ENCODE measurements at regions of chr2 and their contacts with region 1.

Region 1: DNA sequence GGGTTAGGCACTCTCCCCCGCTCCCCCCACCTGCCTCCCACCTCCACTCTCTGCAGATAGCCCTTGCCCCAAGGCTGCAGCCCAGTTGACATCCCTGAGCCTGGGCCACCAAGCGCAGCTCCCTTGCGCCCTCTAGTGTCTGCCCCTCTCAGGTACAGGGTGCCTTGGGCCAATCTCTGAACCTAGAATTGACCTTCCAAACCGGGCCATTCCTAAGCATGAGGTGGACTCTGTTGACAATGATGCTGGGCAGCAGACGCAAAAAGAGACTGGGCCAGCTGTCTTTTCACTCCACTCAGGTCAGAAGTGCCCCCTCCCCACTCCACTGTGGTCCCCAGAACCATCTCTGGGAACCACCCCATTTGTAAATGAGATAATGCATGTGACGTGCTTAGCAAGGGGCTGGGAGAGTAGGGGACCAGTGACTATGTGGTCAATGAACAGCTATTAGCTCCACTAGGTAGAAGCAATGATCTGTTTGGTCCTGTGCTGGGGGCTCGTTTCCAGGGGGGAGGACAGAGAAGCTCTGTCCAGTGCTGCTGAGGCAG is 43.3 kb upstream of the PLB1 start:
- DNase-seq: peak; percentile 92
- ATAC-seq: peak; percentile 57
- H3K4me3 Mint-ChIP-seq: no peak overlapping the region
- H3K27ac Mint-ChIP-seq: peak overlapping the region; percentile 11
- H3K4me1 Mint-ChIP-seq: peaks cover 40% of the 10 kb centered on the region
- H3K27me3 Mint-ChIP-seq: no peaks in the 10 kb centered on the region

Region 2: GRCh38 chr2:27703638-27704341 is 748.8 kb before region 1 on chr2:
- CTCF ChIA-PET with region 1: interaction called, 8 read pairs
- POLR2A ChIA-PET with region 1: no interaction called
- intact Hi-C with region 1: loop called (anchors 1 kb)
- DNase-seq: peak; percentile 92
- ATAC-seq: peak; percentile 78
- H3K4me3 Mint-ChIP-seq: no peak overlapping the region
- H3K27ac Mint-ChIP-seq: peak overlapping the region; percentile 7
- H3K4me1 Mint-ChIP-seq: peaks cover 21% of the 10 kb centered on the region
- H3K27me3 Mint-ChIP-seq: no peaks in the 10 kb centered on the region

Region 3: DNA sequence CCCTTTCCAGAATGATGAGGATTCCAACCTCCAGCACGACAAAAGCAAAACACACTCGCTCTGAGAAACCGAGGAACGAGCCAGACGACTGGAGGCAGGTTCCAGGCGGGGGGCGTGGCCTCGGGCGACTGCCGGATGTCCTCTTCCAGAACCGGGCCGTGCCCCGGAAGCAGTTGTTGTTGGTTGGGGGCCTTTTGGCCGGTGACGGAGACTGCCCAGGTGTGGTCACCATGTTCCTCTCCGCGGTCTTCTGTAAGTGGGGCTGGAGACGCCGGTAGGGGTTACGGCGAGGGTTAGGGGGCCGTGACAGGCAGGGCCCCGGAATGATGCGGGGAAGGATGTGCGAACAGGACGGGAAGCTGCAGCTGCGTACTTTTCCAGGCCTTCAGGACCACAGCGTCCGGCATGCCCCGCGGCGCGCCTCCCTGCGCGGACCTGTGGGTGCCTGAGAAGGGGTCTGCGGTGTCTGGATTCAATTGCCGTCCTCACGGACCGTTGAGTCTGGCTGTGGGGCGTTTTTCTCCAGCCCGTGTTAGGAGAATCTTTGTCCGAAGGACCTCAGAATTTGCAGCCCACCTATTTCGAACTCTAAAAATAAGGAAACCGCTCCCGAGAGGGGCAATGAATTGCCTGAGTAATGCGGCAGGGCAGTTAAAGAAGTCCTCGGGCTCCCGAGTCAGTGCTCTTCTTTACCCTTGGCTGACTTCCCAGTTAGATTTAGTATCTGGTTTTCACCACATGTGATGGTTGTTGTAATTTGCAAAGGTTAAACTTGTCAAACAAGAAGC is 680.9 kb before region 1 on chr2 and contains the start of gene MRPL33:
- CTCF ChIA-PET with region 1: interaction called, 3 read pairs
- POLR2A ChIA-PET with region 1: interaction called, 4 read pairs
- intact Hi-C with region 1: loop called in 1 of 2 experiments (anchors 1 kb)
- DNase-seq: peak; percentile 96
- ATAC-seq: peak; percentile 98
- H3K4me3 Mint-ChIP-seq: peak within 1 kb of the TSS; percentile 99
- H3K27ac Mint-ChIP-seq: peak within 1 kb of the TSS; percentile 99
- H3K4me1 Mint-ChIP-seq: peaks cover 42% of the 10 kb centered on the region
- H3K27me3 Mint-ChIP-seq: no peaks in the 10 kb centered on the region
- total RNA-seq, gene MRPL33: 44.7 to 68.0 TPM

Region 4: DNA sequence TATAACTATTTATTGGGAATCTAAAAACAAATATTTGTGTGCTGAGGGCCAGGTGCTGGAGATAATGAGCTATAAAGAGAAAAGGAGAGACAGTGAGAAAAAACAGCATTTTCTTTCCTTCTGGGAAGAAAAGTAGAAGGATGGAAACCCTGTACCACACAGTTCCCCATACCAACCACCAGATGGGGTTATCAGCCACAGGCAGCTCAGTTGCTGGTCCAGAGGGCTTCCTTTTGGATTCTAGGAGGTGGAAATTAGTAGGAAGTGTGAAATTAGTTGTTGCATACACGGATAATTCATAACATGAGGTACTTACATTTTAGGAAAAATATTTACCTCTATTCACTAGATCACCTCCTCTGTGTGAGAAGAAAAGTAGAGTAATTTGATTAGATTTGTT is 297.0 kb before region 1 on chr2:
- CTCF ChIA-PET with region 1: interaction called, 7 read pairs
- POLR2A ChIA-PET with region 1: no interaction called
- intact Hi-C with region 1: loop called in 1 of 2 experiments (anchors 1 kb)
- DNase-seq: peak; percentile 33
- ATAC-seq: no peak
- H3K4me3 Mint-ChIP-seq: no peak overlapping the region
- H3K27ac Mint-ChIP-seq: no peak overlapping the region
- H3K4me1 Mint-ChIP-seq: no peaks in the 10 kb centered on the region
- H3K27me3 Mint-ChIP-seq: no peaks in the 10 kb centered on the region

Region 5: GRCh38 chr2:28276076-28276618 is 176.5 kb before region 1 on chr2:
- CTCF ChIA-PET with region 1: interaction called, 3 read pairs
- POLR2A ChIA-PET with region 1: no interaction called
- intact Hi-C with region 1: loop called in 1 of 2 experiments (anchors 2 kb)
- DNase-seq: peak; percentile 45
- ATAC-seq: peak; percentile 97
- H3K4me3 Mint-ChIP-seq: no peak overlapping the region
- H3K27ac Mint-ChIP-seq: peak overlapping the region; percentile 15
- H3K4me1 Mint-ChIP-seq: peaks cover 51% of the 10 kb centered on the region
- H3K27me3 Mint-ChIP-seq: no peaks in the 10 kb centered on the region

Region 6: DNA sequence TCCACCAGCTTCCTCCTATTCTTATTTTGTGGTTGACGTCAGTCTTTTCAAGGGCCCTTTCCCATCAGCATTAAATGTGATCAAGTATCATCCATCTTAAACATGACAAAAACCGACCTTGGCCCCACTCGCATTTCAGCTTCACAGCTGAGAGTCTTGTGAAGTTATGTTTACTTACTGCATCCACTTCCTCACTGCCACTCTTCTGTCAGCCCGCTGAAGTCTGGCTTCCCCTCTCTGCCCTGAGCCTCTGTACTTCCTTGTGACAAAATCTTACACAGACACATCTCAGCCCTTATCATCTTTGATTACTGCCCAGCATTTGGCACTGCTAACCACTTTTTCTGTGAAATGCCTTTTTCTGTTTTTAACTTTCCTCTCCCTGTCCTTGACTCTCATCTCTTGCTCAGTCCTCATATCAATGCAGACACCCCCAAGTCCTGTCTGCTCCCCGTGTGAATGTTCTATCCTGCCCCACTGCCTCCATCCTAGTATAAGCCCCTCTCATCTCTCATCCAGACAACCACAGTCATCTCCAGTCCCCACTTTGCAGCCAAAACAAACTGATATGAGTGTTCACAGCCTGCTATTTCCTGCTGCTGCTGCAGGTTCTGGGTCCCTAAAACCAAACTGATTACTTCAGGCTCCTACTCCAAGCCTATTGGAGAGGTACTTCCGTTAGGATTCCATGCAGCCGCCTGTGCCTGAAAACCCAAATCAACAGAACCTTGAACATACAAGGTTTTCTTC is 28.6 kb before region 1 on chr2:
- CTCF ChIA-PET with region 1: interaction called, 4 read pairs
- POLR2A ChIA-PET with region 1: interaction called, 4 read pairs
- intact Hi-C with region 1: loop called (anchors 2 kb)
- DNase-seq: peak; percentile 57
- ATAC-seq: peak; percentile 73
- H3K4me3 Mint-ChIP-seq: peak overlapping the region; percentile 38
- H3K27ac Mint-ChIP-seq: peak overlapping the region; percentile 90
- H3K4me1 Mint-ChIP-seq: peaks cover 44% of the 10 kb centered on the region
- H3K27me3 Mint-ChIP-seq: no peaks in the 10 kb centered on the region